H1 (cell line): ENCODE measurements at regions of chr20 and their contacts with region 1.

Region 1: DNA sequence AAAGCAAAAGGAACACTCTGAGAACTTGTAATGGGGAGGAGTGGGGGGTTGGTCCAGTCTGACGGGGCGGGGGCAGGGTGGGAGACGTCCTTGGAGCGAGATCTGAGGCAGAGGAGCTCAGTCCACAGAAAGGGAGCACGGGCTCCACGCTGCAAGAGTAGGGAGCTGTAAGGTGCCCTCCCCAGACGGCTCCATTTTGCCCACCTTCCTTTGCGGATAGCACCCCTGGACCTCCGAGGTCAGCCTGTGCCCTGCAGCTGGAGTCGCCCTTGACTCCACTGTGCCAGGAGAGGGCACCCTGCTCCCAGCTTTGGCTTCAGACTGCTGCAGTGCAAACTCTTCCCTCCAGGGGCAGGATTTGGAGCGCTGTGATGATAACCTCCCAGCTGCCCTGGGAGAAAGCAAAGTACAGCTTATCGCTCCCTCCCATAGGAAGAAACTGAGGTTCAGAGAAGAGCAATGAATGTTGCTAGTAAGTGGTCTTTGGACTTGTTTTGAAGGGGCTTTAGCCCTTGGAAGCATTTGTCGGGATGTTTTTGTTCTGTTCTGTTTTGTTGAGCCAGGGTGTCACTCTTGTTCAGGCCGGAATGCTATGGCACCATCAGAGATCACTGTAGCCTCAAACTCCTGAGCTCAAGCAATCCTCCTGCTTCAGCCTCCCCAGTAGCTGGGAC is 9.5 kb upstream of the AHCY start:
- DNase-seq: peak; percentile 87 to 97
- H3K4me3 ChIP-seq: peak overlapping the region; percentile 1 to 67 (median 51); a peak in 7 of 8 replicates
- H3K27ac ChIP-seq: no peak overlapping the region
- H3K4me1 ChIP-seq: peaks cover 0 to 3% (median 0%) of the 10 kb centered on the region in 4 experiments; a peak in 2 of 7 replicates
- H3K27me3 ChIP-seq: peaks cover 0 to 8% (median 7%) of the 10 kb centered on the region in 4 experiments; a peak in 5 of 7 replicates
- CTCF ChIP-seq: peak; percentile 100
- EP300 ChIP-seq: peak in 1 of 2 experiments; percentile 33; a peak in 1 of 3 replicates
- POLR2A ChIP-seq: no peak
- RAD21 ChIP-seq: peak; percentile 100

Region 2: DNA sequence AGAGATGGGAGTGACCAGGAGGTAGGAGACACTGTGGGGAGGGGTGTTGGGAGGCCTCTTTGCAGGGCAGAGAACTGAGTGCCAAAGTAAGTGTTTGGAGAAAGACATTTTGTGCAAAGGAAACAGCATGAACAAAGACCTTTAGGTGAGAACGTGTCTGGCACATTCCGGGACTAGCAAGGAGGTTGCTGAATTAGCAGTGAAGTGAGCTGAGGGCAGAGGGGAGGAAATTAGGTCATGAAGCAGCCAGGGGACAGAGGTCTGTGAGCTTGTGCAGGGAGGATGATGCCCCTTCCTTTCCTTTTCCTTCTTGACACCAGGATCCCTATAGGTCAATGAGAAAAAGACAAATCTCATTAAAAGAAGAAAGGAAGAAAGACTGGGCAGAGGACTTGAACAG is 11.9 kb after region 1 on chr20:
- CTCF ChIA-PET with region 1: interaction called, 23 read pairs
- POLR2A ChIA-PET with region 1: interaction called, 3 read pairs
- DNase-seq: no peak
- H3K4me3 ChIP-seq: no peak overlapping the region
- H3K27ac ChIP-seq: no peak overlapping the region
- H3K4me1 ChIP-seq: peaks cover 0 to 7% (median 0%) of the 10 kb centered on the region in 4 experiments; a peak in 2 of 7 replicates
- H3K27me3 ChIP-seq: no peaks in the 10 kb centered on the region
- CTCF ChIP-seq: no peak
- EP300 ChIP-seq: no peak
- POLR2A ChIP-seq: no peak
- RAD21 ChIP-seq: no peak

Region 3: DNA sequence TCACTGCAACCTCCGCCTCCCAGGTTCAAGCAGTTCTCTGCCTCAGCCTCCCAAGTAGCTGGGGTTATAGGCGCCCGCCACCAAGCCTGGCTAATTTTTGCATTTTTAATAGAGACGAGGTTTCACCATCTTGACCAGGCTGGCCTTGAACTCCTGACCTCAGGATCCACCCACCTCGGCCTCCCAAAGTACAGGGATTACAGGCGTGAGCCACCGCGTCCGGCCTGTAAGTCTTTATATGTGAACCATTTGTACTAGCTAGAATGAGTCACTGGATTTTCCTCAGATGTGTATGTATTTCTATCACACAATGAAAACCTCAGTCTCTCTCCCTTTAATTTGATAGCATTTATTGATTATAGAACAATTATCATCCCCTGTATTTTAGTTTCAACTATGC is 84.4 kb after region 1 on chr20:
- CTCF ChIA-PET with region 1: interaction called, 17 read pairs
- POLR2A ChIA-PET with region 1: interaction called, 3 read pairs
- DNase-seq: no peak
- H3K4me3 ChIP-seq: no peak overlapping the region
- H3K27ac ChIP-seq: no peak overlapping the region
- H3K4me1 ChIP-seq: peaks cover 0 to 4% (median 0%) of the 10 kb centered on the region in 4 experiments; a peak in 1 of 7 replicates
- H3K27me3 ChIP-seq: no peaks in the 10 kb centered on the region
- CTCF ChIP-seq: no peak
- EP300 ChIP-seq: no peak
- POLR2A ChIP-seq: no peak
- RAD21 ChIP-seq: no peak

Region 4: GRCh38 chr20:34437330-34437986 is 124.8 kb after region 1 on chr20:
- CTCF ChIA-PET with region 1: interaction called, 32 read pairs
- POLR2A ChIA-PET with region 1: no interaction called
- DNase-seq: no peak
- H3K4me3 ChIP-seq: no peak overlapping the region
- H3K27ac ChIP-seq: no peak overlapping the region
- H3K4me1 ChIP-seq: no peaks in the 10 kb centered on the region
- H3K27me3 ChIP-seq: no peaks in the 10 kb centered on the region
- CTCF ChIP-seq: no peak
- EP300 ChIP-seq: no peak
- POLR2A ChIP-seq: no peak
- RAD21 ChIP-seq: no peak

Region 5: DNA sequence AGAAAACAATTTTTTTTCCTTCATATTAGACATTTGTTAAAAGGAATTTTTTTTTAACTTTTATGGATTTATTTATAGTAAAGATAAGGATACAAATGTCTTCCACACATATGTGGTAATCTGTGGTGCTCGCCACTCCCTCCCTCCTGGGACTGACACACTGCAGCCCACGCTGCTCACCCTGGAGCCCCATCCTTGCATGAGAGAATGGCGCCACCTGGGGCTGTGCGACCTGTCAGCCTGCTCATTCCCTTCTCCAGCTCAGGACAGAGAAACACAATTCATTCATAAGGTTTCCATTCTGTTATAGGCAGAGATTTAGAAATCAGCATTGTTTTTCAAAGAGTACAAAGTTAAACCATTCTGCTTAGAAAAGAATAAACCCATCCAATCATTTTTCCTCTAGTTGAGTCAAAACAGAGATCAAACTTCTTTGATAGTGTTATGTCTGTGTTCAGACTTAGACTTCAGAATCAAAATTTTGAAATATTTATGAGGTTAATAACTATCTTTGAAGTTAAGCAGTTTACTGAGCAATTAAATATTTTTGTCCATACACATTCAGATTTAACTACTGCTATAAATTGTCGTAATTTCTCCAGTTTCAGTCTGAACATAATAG is 160.7 kb after region 1 on chr20:
- CTCF ChIA-PET with region 1: interaction called, 30 read pairs
- POLR2A ChIA-PET with region 1: interaction called, 4 read pairs
- DNase-seq: peak; percentile 17 to 67
- H3K4me3 ChIP-seq: no peak overlapping the region
- H3K27ac ChIP-seq: no peak overlapping the region
- H3K4me1 ChIP-seq: no peaks in the 10 kb centered on the region
- H3K27me3 ChIP-seq: no peaks in the 10 kb centered on the region
- CTCF ChIP-seq: peak; percentile 56 to 63 (median 57)
- EP300 ChIP-seq: no peak
- POLR2A ChIP-seq: no peak
- RAD21 ChIP-seq: peak; percentile 63 to 69

Region 6: DNA sequence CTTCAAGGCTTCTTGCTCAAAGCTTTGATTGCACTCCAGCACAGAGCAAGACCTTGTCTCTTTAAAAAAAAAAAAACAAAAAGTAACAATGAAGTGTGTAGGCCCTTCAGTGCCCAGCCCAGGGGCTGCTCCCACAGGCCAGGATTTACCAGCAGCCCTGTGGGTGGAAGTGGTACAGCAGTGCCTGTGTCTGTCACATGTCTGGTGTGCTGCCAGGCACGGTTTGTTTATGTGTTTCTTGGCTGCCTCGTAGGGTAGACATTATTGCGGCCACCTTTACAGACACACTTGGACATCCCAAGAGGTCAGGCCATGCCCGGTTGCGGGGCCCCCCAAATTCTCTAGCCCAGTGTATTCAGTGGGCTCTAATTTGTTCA is 216.2 kb after region 1 on chr20:
- CTCF ChIA-PET with region 1: interaction called, 50 read pairs
- POLR2A ChIA-PET with region 1: interaction called, 7 read pairs
- DNase-seq: no peak
- H3K4me3 ChIP-seq: no peak overlapping the region
- H3K27ac ChIP-seq: no peak overlapping the region
- H3K4me1 ChIP-seq: no peaks in the 10 kb centered on the region
- H3K27me3 ChIP-seq: no peaks in the 10 kb centered on the region
- CTCF ChIP-seq: no peak
- EP300 ChIP-seq: no peak
- POLR2A ChIP-seq: no peak
- RAD21 ChIP-seq: no peak